ENCODE measurements at regions of chr4 and their contacts with region 1.

Region 1: GRCh38 chr4:168831919-168832762 is 177.9 kb downstream of the CBR4 start:
- DNase-seq: no peak
- H3K4me3 ChIP-seq: peak overlapping the region; percentile 91
- CTCF ChIP-seq: no peak

Region 2: DNA sequence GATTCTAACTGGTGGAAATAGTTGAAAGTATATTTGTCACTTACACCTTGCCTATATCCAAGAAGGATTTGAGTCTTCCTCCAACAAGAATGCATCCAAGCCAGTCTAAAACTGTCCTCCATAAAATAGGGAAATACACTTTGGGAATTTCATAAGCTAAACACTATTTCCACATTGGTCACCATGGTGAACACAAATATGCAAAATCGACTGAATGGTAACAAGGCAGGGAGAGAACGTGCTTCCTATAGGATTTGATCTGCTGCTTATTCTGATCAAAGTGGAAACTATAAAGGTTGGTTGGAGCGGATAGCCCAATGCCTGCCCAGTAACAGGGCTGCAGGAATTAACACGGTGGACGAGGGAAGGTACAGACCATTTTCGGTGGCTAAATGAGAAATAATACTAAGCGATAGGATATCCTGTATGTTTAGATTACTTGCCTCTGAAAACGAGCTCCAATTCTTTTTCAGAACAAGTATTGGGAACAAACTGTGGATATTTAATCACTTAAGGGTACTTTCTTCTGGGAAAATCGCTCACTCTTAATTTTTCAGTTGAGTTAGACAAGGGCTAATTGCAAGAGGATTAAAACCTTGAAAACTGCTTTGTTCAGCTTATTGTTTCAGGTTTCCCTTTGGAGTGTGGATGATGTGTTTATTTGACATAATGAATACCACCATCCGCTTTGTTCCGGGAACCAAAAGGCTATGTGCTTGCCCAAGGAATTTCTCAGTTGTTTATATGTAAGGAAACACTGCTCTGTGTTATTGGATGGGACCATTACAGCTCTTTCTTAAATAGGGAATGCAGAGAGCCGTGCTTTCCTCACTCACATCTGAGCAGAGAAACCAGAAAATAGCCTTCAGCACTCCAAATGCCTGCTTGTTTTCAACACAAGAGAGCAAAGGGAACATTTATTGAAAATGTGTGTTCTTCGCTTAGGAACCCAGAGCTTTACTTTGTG is 16.5 kb before region 1 on chr4:
- CTCF ChIA-PET with region 1: interaction called, 10 read pairs
- POLR2A ChIA-PET with region 1: interaction called, 88 read pairs
- DNase-seq: peak; percentile 33
- H3K4me3 ChIP-seq: no peak overlapping the region
- CTCF ChIP-seq: no peak

Region 3: GRCh38 chr4:168853771-168854219 is 21.7 kb after region 1 on chr4:
- CTCF ChIA-PET with region 1: interaction called, 6 read pairs
- POLR2A ChIA-PET with region 1: interaction called, 25 read pairs
- DNase-seq: no peak
- H3K4me3 ChIP-seq: no peak overlapping the region
- CTCF ChIP-seq: no peak

Region 4: GRCh38 chr4:168942985-168943384 is 110.8 kb after region 1 on chr4:
- CTCF ChIA-PET with region 1: no interaction called
- POLR2A ChIA-PET with region 1: no interaction called
- DNase-seq: no peak
- H3K4me3 ChIP-seq: no peak overlapping the region
- CTCF ChIP-seq: peak; percentile 12

Region 5: DNA sequence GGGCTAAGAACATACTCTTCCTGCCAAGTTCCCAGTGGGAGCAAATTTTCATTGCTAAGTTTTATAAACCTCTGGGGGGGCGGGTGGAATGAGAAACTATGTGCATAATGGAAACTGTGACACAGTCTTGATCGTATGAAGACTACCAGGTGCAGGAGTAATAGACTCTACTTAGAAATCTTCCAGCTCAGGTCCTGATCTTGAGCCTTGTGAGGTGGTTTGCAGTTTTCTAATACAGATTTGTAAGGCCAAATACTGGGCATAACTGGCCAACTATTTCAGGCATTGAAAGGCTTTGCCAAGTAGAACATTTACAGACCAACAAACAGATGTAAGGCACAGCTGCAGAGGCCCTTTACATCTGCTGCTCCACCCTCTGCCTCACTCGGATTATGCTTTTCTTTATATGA is 267.6 kb after region 1 on chr4:
- CTCF ChIA-PET with region 1: no interaction called
- POLR2A ChIA-PET with region 1: no interaction called
- DNase-seq: no peak
- H3K4me3 ChIP-seq: no peak overlapping the region
- CTCF ChIP-seq: no peak